ENCODE measurements at regions of chr20 and their contacts with region 1.

Region 1: DNA sequence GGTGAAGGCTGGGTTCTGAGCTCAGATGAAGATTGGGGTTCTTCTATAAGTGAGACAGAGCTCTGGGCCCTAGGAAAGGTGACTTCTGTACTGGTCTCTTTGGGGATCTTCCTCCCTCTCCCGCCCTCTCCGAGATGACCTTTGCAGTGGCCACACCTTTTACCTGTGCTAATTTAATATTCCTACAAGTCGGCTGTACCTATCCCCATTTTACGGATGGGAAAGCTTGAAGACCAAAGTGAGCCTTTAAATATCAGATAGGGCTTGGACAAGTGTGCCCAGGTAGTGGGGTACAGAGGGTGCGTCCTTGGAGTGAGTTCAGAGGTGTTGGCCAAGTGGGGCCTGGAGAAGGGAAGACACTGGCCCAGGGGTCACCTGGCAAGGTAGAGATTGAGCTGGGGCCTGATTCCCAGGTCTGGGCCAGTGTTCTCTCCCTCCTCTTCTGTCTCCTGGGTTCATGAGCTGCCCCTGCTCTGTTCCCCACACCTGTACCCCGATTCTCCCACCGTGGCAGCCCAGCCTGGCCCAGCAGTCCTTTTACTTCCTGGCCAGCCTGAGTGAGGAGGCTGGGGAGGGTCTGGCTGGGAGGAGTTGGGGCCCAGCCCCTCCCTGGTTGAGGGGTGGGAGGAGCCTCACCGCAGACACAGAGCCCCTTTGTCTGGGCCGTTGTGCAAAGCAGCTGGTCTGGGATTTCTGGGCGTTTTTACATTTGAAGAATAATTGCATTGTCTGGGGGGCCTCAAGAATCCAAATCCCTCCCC is 152.1 kb upstream of the RNF24 start:
- DNase-seq: no peak

Region 2: GRCh38 chr20:4091490-4092479 is 75.7 kb before region 1 on chr20:
- intact Hi-C with region 1: no loop called
- DNase-seq: peak; percentile 90

Region 3: DNA sequence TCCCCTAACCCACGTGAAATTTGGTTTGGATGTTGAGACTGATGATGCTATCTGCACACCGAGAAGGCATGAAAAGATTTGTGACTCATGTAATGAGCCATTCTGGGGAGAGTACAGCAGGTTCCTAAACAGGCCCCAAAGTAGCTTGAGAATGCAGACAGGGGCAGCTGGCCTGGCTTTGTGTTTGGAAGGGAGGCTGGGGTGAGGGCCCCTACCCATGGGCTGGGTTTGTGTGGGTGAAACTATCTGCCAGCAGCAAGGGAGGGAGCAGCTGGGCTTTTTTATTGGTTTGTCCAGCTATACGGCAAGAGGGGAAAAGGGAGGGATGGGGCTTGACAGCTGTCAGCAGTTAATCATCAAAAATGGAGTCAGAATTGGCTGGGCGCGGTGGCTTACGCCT is 65.1 kb before region 1 on chr20:
- intact Hi-C with region 1: loop called in 1 of 2 experiments (anchors 1 kb)
- DNase-seq: no peak

Region 4: GRCh38 chr20:4108495-4109306 is 58.7 kb before region 1 on chr20:
- intact Hi-C with region 1: loop called in 1 of 2 experiments (anchors 2 kb)
- DNase-seq: no peak

Region 5: GRCh38 chr20:5109276-5109675 is 941.8 kb after region 1 on chr20:
- intact Hi-C with region 1: no loop called
- DNase-seq: no peak

Measured in posterior vena cava (tissue), 2 donors.